ENCODE measurements at regions of chr5 and their contacts with region 1.

Region 1: DNA sequence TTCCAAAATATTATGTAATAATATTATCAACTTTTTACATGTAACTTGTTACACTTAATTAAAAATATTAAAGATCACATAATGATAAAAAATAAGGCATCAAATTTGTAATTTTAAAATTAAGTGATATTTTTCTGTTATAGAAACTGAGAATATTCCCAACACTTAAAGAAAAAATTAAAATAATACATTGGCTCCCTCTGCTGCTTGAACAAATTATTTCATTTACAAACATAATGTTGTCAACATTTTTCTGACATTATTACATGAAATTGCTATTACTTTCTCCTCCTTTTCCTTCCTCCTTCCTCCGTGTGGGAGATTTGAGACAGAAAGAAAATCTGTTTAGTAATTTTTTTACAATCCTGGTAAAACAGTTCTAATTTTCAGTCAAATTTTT is 42.3 kb downstream of the RNF180 start:
- DNase-seq: no peak
- CTCF ChIP-seq: no peak

Region 2: DNA sequence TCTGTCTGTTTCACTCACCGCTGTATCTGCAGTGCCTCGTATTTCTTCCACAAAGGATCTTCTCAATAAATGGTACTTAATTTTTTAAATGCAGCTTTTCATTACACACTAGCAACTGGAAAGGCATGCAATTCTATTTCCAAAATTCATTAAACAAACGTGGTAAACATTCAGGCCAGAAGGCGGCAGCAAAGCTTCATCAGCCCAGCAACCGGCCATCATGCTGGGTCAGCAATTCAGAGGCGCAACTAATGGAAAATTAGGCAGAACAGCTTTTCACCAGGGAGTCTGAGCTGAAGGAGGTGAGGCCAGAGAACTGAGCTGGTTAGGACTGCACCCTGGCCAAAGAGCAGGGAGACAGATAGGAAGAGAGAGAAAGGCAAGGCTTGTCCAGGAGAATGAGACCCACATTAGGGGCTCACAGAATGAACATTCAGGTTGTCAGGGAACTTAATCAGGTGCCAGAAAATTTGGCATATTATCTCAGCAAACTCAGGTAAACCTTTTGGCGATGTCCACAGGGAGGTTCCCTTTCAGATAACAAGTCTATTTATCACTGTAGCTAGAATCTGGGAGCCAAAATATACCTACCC is 60.0 kb before region 1 on chr5:
- CTCF ChIA-PET with region 1: interaction called, 19 read pairs
- POLR2A ChIA-PET with region 1: no interaction called
- DNase-seq: peak; percentile 31
- CTCF ChIP-seq: peak; percentile 59

Region 3: GRCh38 chr5:64190562-64191306 is 17.2 kb before region 1 on chr5:
- CTCF ChIA-PET with region 1: no interaction called
- POLR2A ChIA-PET with region 1: no interaction called
- DNase-seq: no peak
- CTCF ChIP-seq: no peak

Region 4: DNA sequence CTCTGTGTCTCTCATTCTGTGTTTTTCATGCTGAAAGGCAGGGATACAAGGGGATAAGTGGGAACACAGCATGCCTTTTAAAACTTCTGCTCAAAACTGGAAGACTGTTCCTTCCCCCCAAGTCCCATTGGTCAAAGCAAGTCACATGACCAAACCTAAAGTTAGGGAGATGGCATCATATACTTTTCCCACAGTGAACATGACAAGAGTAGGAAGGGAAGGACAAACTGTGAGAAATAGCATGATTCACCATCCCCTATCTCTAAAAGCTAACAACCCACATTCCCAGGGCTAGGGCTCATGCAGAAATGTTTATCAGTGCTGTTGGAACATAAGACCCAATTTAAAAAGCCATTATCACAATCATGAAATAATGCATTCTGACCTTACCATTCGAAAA is 458.1 kb after region 1 on chr5:
- CTCF ChIA-PET with region 1: no interaction called
- POLR2A ChIA-PET with region 1: no interaction called
- DNase-seq: no peak
- CTCF ChIP-seq: no peak